Activated B cell treated with CpG ODN at 0.5 μM for 24 hours (primary cell): ENCODE measurements at regions of chr12 and their contacts with region 1.

Region 1: GRCh38 chr12:50257686-50258551 is 25.4 kb downstream of the LIMA1 start:
- DNase-seq: no peak
- ATAC-seq: no peak
- H3K4me3 Mint-ChIP-seq: no peak overlapping the region
- H3K27ac Mint-ChIP-seq: no peak overlapping the region
- H3K4me1 Mint-ChIP-seq: peaks cover 25% of the 10 kb centered on the region
- H3K27me3 Mint-ChIP-seq: no peaks in the 10 kb centered on the region
- CTCF ChIP-seq: no peak

Region 2: GRCh38 chr12:50132505-50133135 is 125.3 kb before region 1 on chr12:
- CTCF ChIA-PET with region 1: no interaction called
- POLR2A ChIA-PET with region 1: no interaction called
- intact Hi-C with region 1: no loop called
- DNase-seq: no peak
- ATAC-seq: no peak
- H3K4me3 Mint-ChIP-seq: no peak overlapping the region
- H3K27ac Mint-ChIP-seq: peak overlapping the region; percentile 7
- H3K4me1 Mint-ChIP-seq: peaks cover 15% of the 10 kb centered on the region
- H3K27me3 Mint-ChIP-seq: no peaks in the 10 kb centered on the region
- CTCF ChIP-seq: no peak

Region 3: DNA sequence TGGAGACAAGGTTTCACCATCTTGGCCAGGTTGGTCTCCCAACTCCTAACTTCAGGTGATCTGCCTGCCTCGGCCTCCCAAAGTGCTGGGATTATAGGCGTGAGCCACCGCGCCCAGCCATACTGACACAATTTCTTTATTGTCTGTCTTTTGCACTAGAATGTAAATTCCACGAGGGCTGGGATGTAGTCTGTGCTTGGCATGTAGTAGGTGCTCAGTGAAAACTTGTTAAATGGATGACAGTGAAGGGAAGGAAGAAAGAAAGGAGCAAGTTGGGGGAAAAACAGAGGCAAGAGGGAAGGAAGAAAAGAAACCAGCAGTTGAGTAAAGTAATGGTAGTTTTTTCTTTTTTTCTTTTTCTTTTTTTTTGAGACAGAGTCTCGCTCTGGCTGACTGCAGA is 27.7 kb before region 1 on chr12:
- CTCF ChIA-PET with region 1: no interaction called
- POLR2A ChIA-PET with region 1: interaction called, 10 read pairs
- intact Hi-C with region 1: no loop called
- DNase-seq: no peak
- ATAC-seq: no peak
- H3K4me3 Mint-ChIP-seq: no peak overlapping the region
- H3K27ac Mint-ChIP-seq: no peak overlapping the region
- H3K4me1 Mint-ChIP-seq: peaks cover 2% of the 10 kb centered on the region
- H3K27me3 Mint-ChIP-seq: no peaks in the 10 kb centered on the region
- CTCF ChIP-seq: no peak

Region 4: GRCh38 chr12:50241178-50241577 is 16.7 kb before region 1 on chr12:
- CTCF ChIA-PET with region 1: no interaction called
- POLR2A ChIA-PET with region 1: no interaction called
- intact Hi-C with region 1: no loop called
- DNase-seq: no peak
- ATAC-seq: no peak
- H3K4me3 Mint-ChIP-seq: no peak overlapping the region
- H3K27ac Mint-ChIP-seq: no peak overlapping the region
- H3K4me1 Mint-ChIP-seq: no peaks in the 10 kb centered on the region
- H3K27me3 Mint-ChIP-seq: no peaks in the 10 kb centered on the region
- CTCF ChIP-seq: no peak

Region 5: DNA sequence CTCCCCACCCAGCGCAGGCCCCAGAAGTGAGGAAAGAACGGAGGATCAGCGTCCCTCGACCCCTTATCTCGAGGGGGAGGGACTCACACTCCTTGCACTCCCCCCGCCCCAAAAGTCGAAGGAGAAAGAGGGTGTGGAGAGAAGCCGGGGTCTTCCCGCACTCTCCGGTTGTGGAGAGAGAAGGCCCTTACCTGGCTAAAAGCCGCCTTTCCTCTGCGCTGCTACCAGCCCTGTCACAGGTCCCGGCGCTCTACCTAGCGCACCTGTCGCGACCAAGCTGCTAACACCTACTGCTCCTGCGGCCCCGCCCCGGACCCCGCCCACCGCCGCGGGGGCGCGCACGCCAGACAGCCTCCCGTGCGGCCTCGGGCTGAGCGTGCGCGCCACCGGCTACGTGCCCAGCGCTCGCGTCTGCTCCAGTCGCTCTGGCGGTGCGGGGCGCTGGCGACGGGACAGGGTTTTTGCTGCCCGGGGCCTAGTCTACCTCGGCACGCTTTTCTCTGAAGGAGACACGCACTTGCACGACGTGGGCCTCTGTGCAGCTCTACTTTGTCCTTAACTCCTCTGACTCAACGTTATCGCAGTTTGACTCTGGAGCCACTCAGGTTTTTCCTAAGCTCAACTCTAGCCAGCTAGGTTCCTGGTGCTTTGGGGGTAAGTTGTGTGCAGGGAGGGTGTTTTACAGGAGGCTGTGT is 25.5 kb after region 1 on chr12 and contains the start of gene LIMA1:
- CTCF ChIA-PET with region 1: no interaction called
- POLR2A ChIA-PET with region 1: no interaction called
- intact Hi-C with region 1: loop called (anchors 2 kb)
- DNase-seq: peak; percentile 95
- ATAC-seq: peak; percentile 97
- H3K4me3 Mint-ChIP-seq: peak within 1 kb of the TSS; percentile 91
- H3K27ac Mint-ChIP-seq: peak within 1 kb of the TSS; percentile 71
- H3K4me1 Mint-ChIP-seq: peaks cover 17% of the 10 kb centered on the region
- H3K27me3 Mint-ChIP-seq: no peaks in the 10 kb centered on the region
- CTCF ChIP-seq: no peak
- total RNA-seq, gene LIMA1: 5.7 and 6.7 TPM in 2 replicates